Posterior vena cava (tissue), 2 donors: ENCODE measurements at regions of chr5 and their contacts with region 1.

Region 1: DNA sequence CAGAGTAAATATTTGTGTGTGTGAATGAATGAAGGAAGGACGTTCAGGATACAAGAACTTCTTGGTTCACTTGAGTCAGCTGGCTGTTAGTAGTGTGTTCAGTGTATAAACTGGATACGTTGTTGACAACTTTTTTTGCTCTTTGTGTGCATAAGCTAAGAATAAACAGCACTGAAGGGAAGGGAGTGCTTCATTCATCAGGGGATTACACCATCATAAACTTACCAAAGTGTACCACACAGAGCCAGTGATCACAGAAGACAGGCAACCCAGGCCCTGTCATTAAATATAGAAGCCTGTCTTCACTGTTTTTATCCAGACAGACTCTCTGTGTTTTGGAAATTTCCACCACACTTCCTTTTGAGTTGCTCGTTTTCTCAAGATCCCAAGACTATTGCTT is 55.5 kb upstream of the MEF2C start:
- DNase-seq: no peak

Region 2: DNA sequence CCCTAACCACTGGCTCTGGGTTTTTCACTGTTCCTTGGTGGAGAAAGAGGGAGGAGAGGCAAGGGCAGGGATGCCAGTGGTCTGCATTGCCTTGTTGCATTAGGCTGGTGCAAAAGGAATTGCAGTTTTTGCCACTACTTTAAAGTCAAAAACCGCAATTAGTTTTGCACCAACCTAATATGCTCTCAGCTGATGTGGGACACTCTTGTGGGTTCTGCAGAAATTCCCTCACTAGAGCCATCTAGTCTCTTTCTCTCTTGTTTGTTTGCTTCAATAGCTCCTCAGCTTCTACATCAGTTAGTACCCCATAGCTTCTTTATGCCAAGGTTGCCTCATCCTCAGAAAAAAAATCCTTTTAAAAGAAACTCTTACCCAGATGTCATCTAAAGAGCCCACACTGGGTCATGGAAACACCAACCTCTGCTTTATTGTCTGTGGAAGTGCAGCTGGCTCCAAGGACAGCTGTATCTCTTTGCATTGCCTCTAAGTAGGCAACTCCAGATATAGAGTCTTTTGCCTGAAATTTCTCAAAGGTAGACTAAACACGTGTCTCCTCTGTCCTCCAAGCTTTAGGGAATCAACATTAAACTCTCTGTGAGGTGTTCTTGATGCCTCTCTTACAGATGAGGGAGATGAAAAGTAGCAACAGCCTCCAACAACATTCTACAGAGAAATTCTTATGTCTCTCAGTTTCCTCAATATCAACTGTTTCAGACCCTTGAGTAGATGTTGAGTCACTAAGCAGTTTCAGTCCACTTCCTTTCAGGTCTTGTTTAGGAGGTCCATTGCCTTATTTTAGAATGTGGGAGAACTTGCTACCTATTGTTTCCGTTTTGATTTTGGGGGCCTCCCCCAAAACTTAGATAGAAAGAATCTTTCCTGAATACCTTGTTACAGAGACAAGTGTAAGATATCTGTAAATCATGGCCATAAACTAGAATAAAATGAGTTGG is 29.4 kb after region 1 on chr5:
- intact Hi-C with region 1: loop called in 1 of 2 experiments (anchors 1 kb)
- DNase-seq: no peak

Region 3: GRCh38 chr5:89480406-89481007 is 542.0 kb after region 1 on chr5:
- intact Hi-C with region 1: no loop called
- DNase-seq: no peak